ENCODE measurements at regions of chr4 and their contacts with region 1.

Region 1: GRCh38 chr4:82677321-82677720 is 115.5 kb upstream of the TMEM150C start:
- DNase-seq: peak in 1 of 2 experiments; percentile 50
- H3K4me3 ChIP-seq: no peak overlapping the region
- H3K4me3 Mint-ChIP-seq: no peak overlapping the region
- H3K27ac Mint-ChIP-seq: no peak overlapping the region
- H3K4me1 ChIP-seq: peaks cover 12% of the 10 kb centered on the region
- H3K4me1 Mint-ChIP-seq: peaks cover 13% of the 10 kb centered on the region
- H3K27me3 ChIP-seq: no peaks in the 10 kb centered on the region
- H3K27me3 Mint-ChIP-seq: no peaks in the 10 kb centered on the region
- CTCF ChIP-seq: no peak

Region 2: DNA sequence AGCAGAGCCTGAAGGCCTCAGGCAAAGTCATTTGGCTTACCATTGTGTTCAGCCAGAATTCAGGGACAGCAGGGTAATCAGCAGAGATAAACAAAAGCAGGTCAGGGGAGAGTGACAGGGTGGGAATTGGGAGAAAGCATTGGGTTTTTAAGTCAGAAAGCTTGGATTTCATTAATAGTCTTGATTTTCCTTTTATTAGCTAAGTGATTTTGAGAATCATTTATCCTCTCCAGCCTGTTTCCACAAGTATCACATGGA is 713.6 kb before region 1 on chr4:
- CTCF ChIA-PET with region 1: no interaction called
- POLR2A ChIA-PET with region 1: no interaction called
- intact Hi-C with region 1: no loop called
- DNase-seq: no peak
- H3K4me3 ChIP-seq: no peak overlapping the region
- H3K4me3 Mint-ChIP-seq: no peak overlapping the region
- H3K27ac Mint-ChIP-seq: no peak overlapping the region
- H3K4me1 ChIP-seq: peaks cover 10% of the 10 kb centered on the region
- H3K4me1 Mint-ChIP-seq: peaks cover 24% of the 10 kb centered on the region
- H3K27me3 ChIP-seq: no peaks in the 10 kb centered on the region
- H3K27me3 Mint-ChIP-seq: no peaks in the 10 kb centered on the region
- CTCF ChIP-seq: no peak

Region 3: GRCh38 chr4:82706349-82707000 is 29.2 kb after region 1 on chr4:
- CTCF ChIA-PET with region 1: no interaction called
- POLR2A ChIA-PET with region 1: no interaction called
- intact Hi-C with region 1: no loop called
- DNase-seq: no peak
- H3K4me3 ChIP-seq: no peak overlapping the region
- H3K4me3 Mint-ChIP-seq: no peak overlapping the region
- H3K27ac Mint-ChIP-seq: no peak overlapping the region
- H3K4me1 ChIP-seq: no peaks in the 10 kb centered on the region
- H3K4me1 Mint-ChIP-seq: no peaks in the 10 kb centered on the region
- H3K27me3 ChIP-seq: no peaks in the 10 kb centered on the region
- H3K27me3 Mint-ChIP-seq: no peaks in the 10 kb centered on the region
- CTCF ChIP-seq: no peak

Region 4: GRCh38 chr4:82774711-82775171 is 97.4 kb after region 1 on chr4:
- CTCF ChIA-PET with region 1: no interaction called
- POLR2A ChIA-PET with region 1: no interaction called
- intact Hi-C with region 1: no loop called
- DNase-seq: no peak
- H3K4me3 ChIP-seq: no peak overlapping the region
- H3K4me3 Mint-ChIP-seq: no peak overlapping the region
- H3K27ac Mint-ChIP-seq: no peak overlapping the region
- H3K4me1 ChIP-seq: no peaks in the 10 kb centered on the region
- H3K4me1 Mint-ChIP-seq: no peaks in the 10 kb centered on the region
- H3K27me3 ChIP-seq: no peaks in the 10 kb centered on the region
- H3K27me3 Mint-ChIP-seq: no peaks in the 10 kb centered on the region
- CTCF ChIP-seq: no peak

Region 5: DNA sequence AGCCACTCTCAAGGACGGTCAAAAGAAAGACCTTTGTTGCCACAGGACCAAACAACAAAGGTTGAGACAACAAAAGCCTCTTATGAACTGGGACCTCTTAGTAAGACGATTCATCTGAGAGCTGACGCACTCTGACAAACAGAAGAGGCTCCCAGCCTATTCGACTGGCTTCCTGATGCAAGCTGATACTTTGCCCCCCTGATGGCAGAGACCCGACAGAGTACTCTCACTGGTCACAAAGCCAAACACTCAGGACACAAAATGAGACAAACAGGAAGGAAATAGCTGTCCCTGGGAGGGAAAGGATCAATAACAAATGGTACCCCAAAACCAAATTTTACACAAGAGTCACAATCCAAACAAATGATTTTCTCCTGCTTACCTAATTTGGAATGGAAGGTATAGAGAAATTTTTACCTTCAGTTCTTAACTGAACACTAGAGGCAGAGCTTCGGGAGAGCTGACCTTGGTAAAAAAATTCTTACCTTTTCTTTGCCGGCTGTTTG is 512.4 kb after region 1 on chr4:
- CTCF ChIA-PET with region 1: interaction called, 13 read pairs
- POLR2A ChIA-PET with region 1: no interaction called
- intact Hi-C with region 1: no loop called
- DNase-seq: no peak
- H3K4me3 ChIP-seq: no peak overlapping the region
- H3K4me3 Mint-ChIP-seq: no peak overlapping the region
- H3K27ac Mint-ChIP-seq: no peak overlapping the region
- H3K4me1 ChIP-seq: no peaks in the 10 kb centered on the region
- H3K4me1 Mint-ChIP-seq: no peaks in the 10 kb centered on the region
- H3K27me3 ChIP-seq: no peaks in the 10 kb centered on the region
- H3K27me3 Mint-ChIP-seq: no peaks in the 10 kb centered on the region
- CTCF ChIP-seq: no peak

Region 6: GRCh38 chr4:83252782-83253405 is 575.6 kb after region 1 on chr4:
- CTCF ChIA-PET with region 1: no interaction called
- POLR2A ChIA-PET with region 1: no interaction called
- intact Hi-C with region 1: no loop called
- DNase-seq: peak; percentile 69 to 72
- H3K4me3 ChIP-seq: no peak overlapping the region
- H3K4me3 Mint-ChIP-seq: no peak overlapping the region
- H3K27ac Mint-ChIP-seq: no peak overlapping the region
- H3K4me1 ChIP-seq: peaks cover 28% of the 10 kb centered on the region
- H3K4me1 Mint-ChIP-seq: peaks cover 8% of the 10 kb centered on the region
- H3K27me3 ChIP-seq: no peaks in the 10 kb centered on the region
- H3K27me3 Mint-ChIP-seq: no peaks in the 10 kb centered on the region
- CTCF ChIP-seq: peak; percentile 48 to 52

Measured in Caco-2 (cell line).